B cell (primary cell): ENCODE measurements at regions of chr15 and their contacts with region 1.

Region 1: DNA sequence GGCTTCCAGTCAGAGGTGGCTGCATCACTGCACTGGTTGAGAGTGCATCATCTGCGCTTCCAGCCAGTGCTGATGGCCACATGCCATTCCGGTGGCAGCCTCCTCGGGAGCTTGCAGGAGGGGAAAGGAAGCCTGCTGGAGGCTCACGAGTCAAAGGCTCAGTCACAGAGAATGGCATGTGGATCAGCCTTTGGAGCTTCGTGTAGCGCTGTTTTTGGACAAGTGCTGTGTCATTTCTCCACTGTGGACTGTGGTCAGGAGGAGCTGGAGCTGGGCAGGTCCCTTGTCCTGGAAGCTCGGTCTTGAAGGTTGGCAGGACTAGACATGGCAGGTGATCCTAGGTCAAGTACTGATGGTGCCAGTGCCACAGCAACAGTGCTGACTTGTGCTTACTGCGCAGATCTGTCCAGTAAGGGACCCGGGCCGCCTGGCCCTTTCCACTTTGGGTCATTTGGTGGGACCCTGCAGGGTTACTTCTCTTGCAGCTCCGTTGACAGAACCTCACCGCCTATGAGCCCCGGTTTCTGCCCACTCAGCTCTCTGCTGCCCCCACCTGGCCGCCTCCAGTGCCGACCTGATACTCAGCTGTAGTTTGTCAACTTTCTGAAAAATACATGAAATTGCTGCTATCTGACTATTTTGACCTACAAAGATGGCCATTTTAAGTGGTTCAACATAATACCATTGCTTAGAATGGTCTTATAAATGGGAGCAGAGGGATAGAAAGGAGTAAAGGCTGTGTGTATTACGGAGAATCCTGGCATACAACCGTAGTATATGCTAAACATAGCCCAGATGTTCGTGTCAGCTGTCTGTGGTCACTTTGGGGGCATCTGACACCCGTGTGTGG is 27.6 kb upstream of the TRPM1 start:
- DNase-seq: peak; percentile 85
- ATAC-seq: peak; percentile 89
- H3K4me3 ChIP-seq: peak overlapping the region in 1 of 5 experiments; percentile 15
- H3K4me3 Mint-ChIP-seq: peak overlapping the region; percentile 0
- H3K27ac ChIP-seq: no peak overlapping the region
- H3K27ac Mint-ChIP-seq: peak overlapping the region; percentile 4
- H3K4me1 ChIP-seq: peaks cover 11 to 13% of the 10 kb centered on the region in 2 donors
- H3K4me1 Mint-ChIP-seq: peaks cover 13% of the 10 kb centered on the region
- H3K27me3 ChIP-seq: no peaks in the 10 kb centered on the region
- H3K27me3 Mint-ChIP-seq: no peaks in the 10 kb centered on the region
- CTCF ChIP-seq: peak; percentile 94

Region 2: DNA sequence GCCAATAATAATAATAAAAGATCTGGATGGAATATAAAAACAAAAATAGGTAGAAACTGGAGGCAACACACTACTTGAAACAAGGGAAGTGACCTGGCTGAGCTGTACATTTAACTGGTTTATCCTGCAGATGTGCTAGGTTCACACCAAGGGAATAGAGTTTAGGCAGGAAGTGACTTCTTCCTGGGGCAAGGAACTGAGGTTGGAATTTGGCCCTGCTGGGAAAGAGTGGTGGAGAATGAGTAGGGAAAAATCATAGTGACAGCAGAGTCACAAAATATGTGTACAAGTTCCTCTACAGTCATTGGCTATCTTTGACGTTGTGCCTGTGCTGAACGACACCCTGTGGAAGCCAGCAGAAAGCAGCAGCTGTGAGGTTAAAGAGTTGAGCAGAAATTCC is 459.1 kb before region 1 on chr15:
- CTCF ChIA-PET with region 1: interaction called, 10 read pairs
- POLR2A ChIA-PET with region 1: no interaction called
- intact Hi-C with region 1: no loop called
- DNase-seq: no peak
- ATAC-seq: no peak
- H3K4me3 ChIP-seq: no peak overlapping the region
- H3K4me3 Mint-ChIP-seq: no peak overlapping the region
- H3K27ac ChIP-seq: no peak overlapping the region
- H3K27ac Mint-ChIP-seq: no peak overlapping the region
- H3K4me1 ChIP-seq: no peaks in the 10 kb centered on the region
- H3K4me1 Mint-ChIP-seq: no peaks in the 10 kb centered on the region
- H3K27me3 ChIP-seq: no peaks in the 10 kb centered on the region
- H3K27me3 Mint-ChIP-seq: no peaks in the 10 kb centered on the region
- CTCF ChIP-seq: no peak

Region 3: GRCh38 chr15:30896211-30896606 is 232.9 kb before region 1 on chr15:
- CTCF ChIA-PET with region 1: interaction called, 49 read pairs
- POLR2A ChIA-PET with region 1: no interaction called
- intact Hi-C with region 1: loop called (anchors 1 kb)
- DNase-seq: no peak
- ATAC-seq: no peak
- H3K4me3 ChIP-seq: no peak overlapping the region
- H3K4me3 Mint-ChIP-seq: no peak overlapping the region
- H3K27ac ChIP-seq: no peak overlapping the region
- H3K27ac Mint-ChIP-seq: no peak overlapping the region
- H3K4me1 ChIP-seq: no peaks in the 10 kb centered on the region
- H3K4me1 Mint-ChIP-seq: peaks cover 5% of the 10 kb centered on the region
- H3K27me3 ChIP-seq: no peaks in the 10 kb centered on the region
- H3K27me3 Mint-ChIP-seq: no peaks in the 10 kb centered on the region
- CTCF ChIP-seq: no peak

Region 4: DNA sequence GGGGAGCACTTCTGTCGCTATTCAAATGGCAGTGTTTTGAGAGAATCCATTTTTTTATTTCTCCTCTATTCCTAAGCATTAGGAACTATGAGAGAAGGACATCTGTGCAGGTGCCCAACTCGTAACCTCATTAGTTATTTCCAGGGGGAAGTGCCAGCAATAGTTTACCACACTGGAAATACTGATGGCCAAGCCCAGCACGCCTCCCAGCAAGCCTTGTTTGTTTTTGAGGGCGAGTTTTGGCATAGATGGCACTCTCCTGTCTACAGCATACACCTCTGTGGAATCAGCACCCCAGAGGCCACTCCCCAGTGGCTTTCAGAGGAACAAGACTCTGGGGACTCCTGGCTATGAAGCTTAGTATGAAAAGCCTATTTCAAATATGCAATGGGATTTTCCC is 188.8 kb before region 1 on chr15:
- CTCF ChIA-PET with region 1: interaction called, 29 read pairs
- POLR2A ChIA-PET with region 1: no interaction called
- intact Hi-C with region 1: no loop called
- DNase-seq: no peak
- ATAC-seq: no peak
- H3K4me3 ChIP-seq: no peak overlapping the region
- H3K4me3 Mint-ChIP-seq: no peak overlapping the region
- H3K27ac ChIP-seq: no peak overlapping the region
- H3K27ac Mint-ChIP-seq: peak overlapping the region; percentile 3
- H3K4me1 ChIP-seq: no peaks in the 10 kb centered on the region
- H3K4me1 Mint-ChIP-seq: no peaks in the 10 kb centered on the region
- H3K27me3 ChIP-seq: no peaks in the 10 kb centered on the region
- H3K27me3 Mint-ChIP-seq: no peaks in the 10 kb centered on the region
- CTCF ChIP-seq: no peak

Region 5: DNA sequence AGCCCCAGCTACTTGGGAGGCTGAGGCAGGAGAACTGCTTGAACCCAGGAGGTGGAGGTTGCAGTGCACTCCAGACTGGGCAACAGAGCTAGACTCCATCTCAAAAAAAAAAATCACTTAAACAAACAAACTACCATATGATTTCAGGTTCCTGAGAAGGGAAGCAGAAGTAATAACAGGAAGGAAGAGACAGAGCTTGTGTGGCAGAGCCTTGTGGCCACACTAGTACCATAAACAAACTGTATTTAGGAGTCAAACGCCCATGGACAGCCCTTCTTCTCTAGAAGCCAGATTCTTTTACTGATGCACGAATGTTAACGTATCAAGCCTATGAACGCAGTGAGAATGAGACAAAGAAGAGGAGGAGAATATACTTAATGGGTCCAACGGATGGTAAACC is 149.7 kb before region 1 on chr15:
- CTCF ChIA-PET with region 1: interaction called, 44 read pairs
- POLR2A ChIA-PET with region 1: no interaction called
- intact Hi-C with region 1: loop called (anchors 5 kb)
- DNase-seq: peak; percentile 41
- ATAC-seq: peak; percentile 67
- H3K4me3 ChIP-seq: peak overlapping the region in 1 of 5 experiments; percentile 43
- H3K4me3 Mint-ChIP-seq: peak overlapping the region; percentile 65
- H3K27ac ChIP-seq: peak overlapping the region; percentile 18 to 58
- H3K27ac Mint-ChIP-seq: peak overlapping the region; percentile 83
- H3K4me1 ChIP-seq: peaks cover 50 to 57% of the 10 kb centered on the region in 2 donors
- H3K4me1 Mint-ChIP-seq: peaks cover 75% of the 10 kb centered on the region
- H3K27me3 ChIP-seq: no peaks in the 10 kb centered on the region
- H3K27me3 Mint-ChIP-seq: no peaks in the 10 kb centered on the region
- CTCF ChIP-seq: no peak

Region 6: DNA sequence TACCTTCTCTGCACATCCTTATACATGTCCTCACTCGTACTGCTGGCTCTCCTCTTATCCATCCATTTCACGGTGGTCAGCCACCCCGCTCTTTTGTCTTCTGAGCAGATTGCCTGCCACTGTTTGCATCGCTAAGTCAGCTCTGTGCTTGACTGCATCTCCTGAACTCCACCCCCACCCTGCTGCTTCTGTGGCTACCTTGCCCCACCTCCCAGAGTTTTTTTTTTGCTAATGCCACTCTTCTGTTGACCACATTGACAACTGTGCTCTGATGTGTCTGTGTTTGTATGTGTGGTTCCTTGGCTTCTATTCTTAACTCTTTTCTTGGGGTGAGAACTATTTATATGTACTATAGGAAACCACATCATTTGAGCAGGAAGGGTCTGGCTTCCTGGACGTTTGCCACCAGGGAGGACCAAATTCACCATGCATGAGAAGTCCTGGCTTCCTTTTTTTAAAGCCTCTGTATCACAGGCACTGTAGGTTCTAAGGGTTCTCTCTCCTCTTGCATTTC is 124.9 kb before region 1 on chr15:
- CTCF ChIA-PET with region 1: interaction called, 12 read pairs
- POLR2A ChIA-PET with region 1: no interaction called
- intact Hi-C with region 1: no loop called
- DNase-seq: peak; percentile 83
- ATAC-seq: peak; percentile 92
- H3K4me3 ChIP-seq: peak overlapping the region in 4 of 5 experiments; percentile 3 to 47 (median 30)
- H3K4me3 Mint-ChIP-seq: peak overlapping the region; percentile 75
- H3K27ac ChIP-seq: peak overlapping the region; percentile 28 to 55
- H3K27ac Mint-ChIP-seq: peak overlapping the region; percentile 90
- H3K4me1 ChIP-seq: peaks cover 46 to 61% of the 10 kb centered on the region in 2 donors
- H3K4me1 Mint-ChIP-seq: peaks cover 84% of the 10 kb centered on the region
- H3K27me3 ChIP-seq: no peaks in the 10 kb centered on the region
- H3K27me3 Mint-ChIP-seq: no peaks in the 10 kb centered on the region
- CTCF ChIP-seq: no peak

Region 7: GRCh38 chr15:31106495-31107300 is 22.4 kb before region 1 on chr15:
- CTCF ChIA-PET with region 1: interaction called, 13 read pairs
- POLR2A ChIA-PET with region 1: interaction called, 12 read pairs
- intact Hi-C with region 1: no loop called
- DNase-seq: no peak
- ATAC-seq: no peak
- H3K4me3 ChIP-seq: no peak overlapping the region
- H3K4me3 Mint-ChIP-seq: no peak overlapping the region
- H3K27ac ChIP-seq: no peak overlapping the region
- H3K27ac Mint-ChIP-seq: no peak overlapping the region
- H3K4me1 ChIP-seq: no peaks in the 10 kb centered on the region
- H3K4me1 Mint-ChIP-seq: no peaks in the 10 kb centered on the region
- H3K27me3 ChIP-seq: no peaks in the 10 kb centered on the region
- H3K27me3 Mint-ChIP-seq: no peaks in the 10 kb centered on the region
- CTCF ChIP-seq: no peak

Region 8: DNA sequence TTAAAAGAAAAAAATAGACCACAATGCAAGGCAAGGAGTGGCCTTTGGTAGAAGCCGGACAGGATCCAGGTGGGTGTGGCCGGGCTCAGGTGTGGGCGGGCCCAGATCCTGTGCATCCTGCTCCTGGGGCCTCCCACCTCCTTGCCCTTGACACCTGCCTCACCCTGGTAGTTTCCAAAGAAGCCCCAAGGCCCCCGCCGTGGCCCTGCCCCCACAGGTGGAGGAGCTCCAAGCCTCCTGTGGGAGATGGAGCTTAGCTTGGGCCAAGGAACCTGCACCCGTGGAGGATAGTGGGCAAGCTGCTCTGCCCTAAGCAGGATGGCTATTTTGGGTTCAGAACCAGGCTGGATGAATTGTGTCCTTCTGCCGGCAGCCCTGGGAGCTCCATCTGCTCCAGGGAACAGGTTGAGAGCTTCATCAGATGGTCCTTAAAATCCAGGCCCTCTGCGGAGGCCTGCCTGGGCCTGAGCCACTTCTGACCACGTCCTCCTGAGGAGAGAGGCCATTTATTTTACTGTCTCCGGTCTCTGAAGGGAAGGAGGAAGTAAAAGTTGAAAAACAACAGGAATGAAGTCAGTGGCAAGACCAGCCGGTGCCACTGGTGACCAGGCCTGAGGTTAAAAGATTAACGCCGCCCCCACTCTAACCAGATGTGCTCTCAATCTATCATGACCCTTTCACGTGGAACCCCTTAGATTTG is 143.6 kb after region 1 on chr15:
- CTCF ChIA-PET with region 1: no interaction called
- POLR2A ChIA-PET with region 1: no interaction called
- intact Hi-C with region 1: no loop called
- DNase-seq: no peak
- ATAC-seq: no peak
- H3K4me3 ChIP-seq: no peak overlapping the region
- H3K4me3 Mint-ChIP-seq: peak overlapping the region; percentile 49
- H3K27ac ChIP-seq: no peak overlapping the region
- H3K27ac Mint-ChIP-seq: peak overlapping the region; percentile 73
- H3K4me1 ChIP-seq: peaks cover 23 to 33% of the 10 kb centered on the region in 2 donors
- H3K4me1 Mint-ChIP-seq: peaks cover 36% of the 10 kb centered on the region
- H3K27me3 ChIP-seq: no peaks in the 10 kb centered on the region
- H3K27me3 Mint-ChIP-seq: no peaks in the 10 kb centered on the region
- CTCF ChIP-seq: no peak